GM18951 (cell line): ENCODE measurements at regions of chr14 and their contacts with region 1.

Region 1: DNA sequence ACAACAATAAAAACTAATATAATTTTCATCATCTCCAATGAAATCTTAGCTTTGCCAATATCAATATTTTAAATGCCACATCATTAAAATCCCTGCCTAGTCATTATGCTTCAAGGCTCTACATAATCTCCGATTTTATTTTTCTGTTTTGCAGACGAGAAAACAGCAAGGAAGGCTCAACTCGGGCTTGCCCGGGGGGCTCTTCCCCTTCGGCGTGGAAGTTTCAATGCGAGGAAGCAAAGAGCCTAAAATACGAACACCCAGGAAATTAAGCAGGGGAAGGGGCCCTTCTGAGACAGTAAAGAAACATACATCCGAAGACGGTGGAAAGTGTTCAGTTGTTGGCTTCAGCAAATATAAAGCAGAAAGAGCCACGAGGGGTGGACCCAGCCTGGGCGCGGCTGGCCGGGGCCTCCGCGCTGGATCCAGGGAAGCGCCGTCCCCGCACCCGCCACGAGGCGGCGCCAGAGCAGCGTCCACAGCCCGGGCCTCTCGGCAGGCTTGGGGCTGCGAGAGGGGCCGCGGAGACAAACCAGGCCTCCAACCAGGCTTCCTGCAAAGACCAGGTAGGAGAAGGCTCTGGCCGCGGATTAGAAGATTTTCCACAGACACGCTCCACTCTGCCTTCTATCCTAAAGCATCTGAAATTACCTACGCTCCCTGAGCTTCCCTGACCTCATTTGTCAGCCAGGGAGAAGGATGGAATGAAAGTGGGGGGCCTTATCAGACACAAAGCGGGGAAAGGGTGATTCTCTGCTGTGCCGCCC is 77.2 kb downstream of the SERPINA3 start:
- POLR2A ChIP-seq: no peak

Region 2: DNA sequence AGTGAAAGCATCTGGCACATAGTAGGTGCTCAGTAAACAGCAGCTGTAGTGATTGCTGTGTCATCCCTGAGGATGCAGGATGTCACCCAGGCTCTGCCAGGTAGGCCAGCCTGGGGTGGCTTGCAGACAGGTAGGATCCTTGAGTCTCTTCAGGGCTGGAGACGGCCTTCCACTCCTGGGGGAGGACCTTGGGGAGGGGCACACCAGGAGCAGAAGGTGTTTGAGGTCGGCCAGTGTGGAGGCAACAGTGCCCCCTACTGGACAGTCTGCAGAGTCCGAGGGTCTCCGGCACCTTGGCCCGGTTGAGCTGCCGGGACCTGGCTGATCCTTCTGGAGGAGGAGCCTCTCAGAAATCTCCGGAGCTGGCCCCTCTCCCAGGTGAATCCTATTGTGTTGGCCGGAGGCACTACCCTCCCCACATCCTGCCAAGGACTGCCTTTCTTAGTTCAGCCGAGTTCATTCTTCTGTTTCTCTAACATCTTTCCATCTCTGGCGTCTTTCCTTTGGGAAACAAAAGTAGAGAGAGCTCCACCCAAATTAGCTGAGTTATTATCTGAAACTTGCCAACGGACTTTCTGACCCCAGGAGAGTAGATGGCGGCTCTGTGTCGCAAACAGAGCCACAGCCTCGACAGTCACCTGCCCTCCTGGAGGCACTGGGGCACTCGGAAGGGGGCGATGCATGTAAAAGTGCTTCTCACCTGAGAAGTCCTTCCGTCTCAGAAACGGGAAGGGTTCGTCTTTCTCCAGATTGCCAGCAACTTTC is 672.2 kb after region 1 on chr14:
- in situ Hi-C with region 1: loop called (anchors 25 kb)
- POLR2A ChIP-seq: no peak